GM10248 (cell line): ENCODE measurements at regions of chr10 and their contacts with region 1.

Region 1: GRCh38 chr10:50275650-50276235 is 24.4 kb upstream of the ASAH2 start:
- DNase-seq: peak; percentile 23
- CTCF ChIP-seq: peak; percentile 86

Region 2: DNA sequence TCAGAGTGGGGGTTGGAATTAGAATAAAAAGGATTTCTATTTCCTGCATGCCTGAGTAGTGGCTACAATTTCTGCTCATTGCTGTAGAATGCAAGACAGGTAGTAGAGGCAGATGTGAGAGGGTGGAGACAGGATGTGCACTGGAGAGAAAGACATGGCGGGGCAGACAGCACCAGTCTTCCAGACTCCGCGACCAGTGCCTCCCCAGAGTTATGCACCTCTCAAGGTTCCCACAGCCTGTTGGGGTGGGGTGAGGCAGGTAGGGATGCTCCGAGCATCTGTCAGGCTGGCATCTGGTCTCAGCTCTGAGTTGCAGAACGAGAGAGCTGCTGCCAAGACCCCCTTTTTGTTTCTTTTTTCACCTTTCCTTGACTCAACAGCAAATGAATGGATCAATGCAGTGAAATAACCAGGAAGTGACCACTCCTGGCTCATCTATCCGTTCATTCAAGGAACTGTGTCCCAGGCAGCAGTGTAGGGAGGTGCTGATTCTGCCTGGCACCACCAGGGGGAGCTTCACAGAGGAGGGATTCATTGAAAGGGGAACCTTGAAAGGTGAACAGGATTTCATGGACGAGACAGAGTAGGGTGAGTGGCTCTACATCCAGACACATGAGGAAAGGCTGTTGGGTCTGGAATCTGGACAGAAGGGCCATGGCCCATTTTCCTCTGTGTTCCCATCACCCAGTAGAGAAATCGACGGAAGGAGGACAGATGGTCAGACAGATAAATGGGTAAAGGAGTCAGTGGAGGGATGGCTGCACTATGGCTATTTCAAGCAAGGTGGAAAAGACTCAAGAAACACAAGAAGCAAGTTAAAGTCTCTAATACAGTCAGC is 682.8 kb before region 1 on chr10:
- CTCF ChIA-PET with region 1: interaction called, 22 read pairs
- POLR2A ChIA-PET with region 1: no interaction called
- DNase-seq: peak; percentile 80
- CTCF ChIP-seq: peak; percentile 94

Region 3: GRCh38 chr10:50224330-50224952 is 51.3 kb before region 1 on chr10:
- CTCF ChIA-PET with region 1: interaction called, 10 read pairs
- POLR2A ChIA-PET with region 1: no interaction called
- DNase-seq: peak; percentile 43
- CTCF ChIP-seq: peak; percentile 72

Region 4: GRCh38 chr10:50254471-50254870 is 21.3 kb before region 1 on chr10:
- CTCF ChIA-PET with region 1: interaction called, 56 read pairs
- POLR2A ChIA-PET with region 1: no interaction called
- DNase-seq: no peak
- CTCF ChIP-seq: no peak

Region 5: DNA sequence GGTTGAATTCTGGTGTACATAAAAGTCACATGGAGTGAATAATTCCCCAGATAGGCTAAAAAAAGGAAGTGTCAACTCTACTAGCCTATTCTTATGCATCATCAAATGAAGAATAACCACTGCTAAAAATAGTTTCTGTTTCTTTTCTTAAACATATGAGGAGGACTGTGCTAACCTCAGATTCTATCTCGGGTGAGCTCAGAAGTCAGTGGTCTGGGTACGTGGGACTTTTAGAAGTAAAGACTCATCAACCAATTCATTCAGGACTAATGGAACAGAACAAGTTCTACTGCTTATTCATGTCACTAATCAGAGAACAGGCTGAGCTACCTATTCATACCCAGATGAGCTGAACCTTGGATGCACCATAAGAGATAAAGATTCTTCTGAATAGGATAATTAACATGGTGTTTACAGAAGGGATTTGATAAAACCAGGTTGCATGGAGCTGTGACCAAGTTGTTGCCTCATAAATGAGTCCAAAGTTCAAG is 14.9 kb before region 1 on chr10:
- CTCF ChIA-PET with region 1: interaction called, 56 read pairs
- POLR2A ChIA-PET with region 1: no interaction called
- DNase-seq: peak; percentile 77
- CTCF ChIP-seq: no peak

Region 6: DNA sequence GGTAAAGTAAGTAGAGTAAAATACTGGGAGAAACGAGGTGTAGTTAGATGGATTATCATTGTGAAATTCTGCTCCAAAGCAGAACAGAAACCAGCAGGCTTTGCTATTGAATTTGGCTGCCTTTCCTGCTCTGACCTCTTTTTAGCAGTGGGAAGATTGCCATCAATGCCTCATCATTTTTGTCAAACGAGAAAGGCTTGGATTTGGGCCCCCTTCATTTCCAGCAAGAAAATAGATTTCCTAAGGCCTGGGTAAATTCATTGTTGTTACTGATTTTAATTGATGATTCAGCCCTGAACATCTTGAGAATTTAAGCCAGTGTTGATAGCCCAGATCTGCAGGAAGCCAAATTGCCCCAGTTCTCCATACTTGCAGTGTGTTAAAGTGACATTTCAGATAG is 10.8 kb after region 1 on chr10:
- CTCF ChIA-PET with region 1: interaction called, 21 read pairs
- POLR2A ChIA-PET with region 1: no interaction called
- DNase-seq: no peak
- CTCF ChIP-seq: no peak

Region 7: GRCh38 chr10:50325449-50326171 is 49.9 kb after region 1 on chr10:
- CTCF ChIA-PET with region 1: interaction called, 10 read pairs
- POLR2A ChIA-PET with region 1: no interaction called
- DNase-seq: peak; percentile 42
- CTCF ChIP-seq: no peak